ENCODE measurements at regions of chr16 and their contacts with region 1.

Region 1: DNA sequence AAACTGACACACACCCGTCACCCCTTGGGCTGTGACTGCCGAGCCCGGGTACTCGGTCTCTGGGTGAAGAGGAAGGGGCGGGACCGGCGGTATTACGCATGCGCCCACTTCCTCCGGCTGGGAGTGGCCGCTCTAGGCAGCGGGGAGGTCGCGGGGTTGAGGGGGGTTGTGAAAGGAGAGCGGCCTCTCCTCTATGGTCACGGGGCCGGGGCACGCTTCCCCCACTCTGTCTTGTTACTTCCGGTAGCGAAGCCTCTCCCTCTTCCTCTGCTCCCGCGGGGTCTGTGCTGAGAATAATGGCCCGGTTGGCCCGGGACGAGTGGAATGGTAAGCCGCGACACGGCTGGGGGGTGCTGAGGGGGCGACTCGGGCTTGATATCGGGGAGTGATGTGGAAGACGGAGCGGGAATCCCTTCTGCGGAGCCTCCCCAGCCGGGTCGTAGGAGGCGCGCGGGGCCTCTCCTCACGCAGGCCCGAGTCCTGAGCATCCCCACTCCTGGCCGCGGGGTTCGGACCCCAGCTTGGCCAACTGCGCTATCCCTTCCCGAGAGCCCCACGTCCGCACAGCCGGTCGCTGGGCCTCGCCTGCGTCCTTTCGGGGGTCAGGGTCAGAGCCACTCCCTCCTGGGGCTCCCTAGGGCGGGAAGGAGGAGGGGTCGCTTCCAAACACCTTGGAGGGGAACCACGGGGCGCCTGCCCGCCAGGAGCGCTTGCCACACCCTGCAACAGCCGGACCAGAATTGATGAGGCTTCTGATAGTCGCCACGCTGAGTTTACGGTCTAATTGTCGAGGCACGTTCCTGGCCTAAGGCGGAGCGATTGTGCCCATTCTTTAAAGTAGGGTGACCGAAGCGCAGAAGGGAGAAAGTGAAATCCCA is at the start of gene BFAR:
- DNase-seq: peak; percentile 99
- H3K4me3 Mint-ChIP-seq: peak within 1 kb of the TSS; percentile 100
- H3K27ac Mint-ChIP-seq: peak within 1 kb of the TSS; percentile 96
- H3K4me1 Mint-ChIP-seq: peaks cover 57% of the 10 kb centered on the region
- H3K27me3 Mint-ChIP-seq: no peaks in the 10 kb centered on the region
- total RNA-seq, gene BFAR: 46.5 to 51.4 TPM

Region 2: DNA sequence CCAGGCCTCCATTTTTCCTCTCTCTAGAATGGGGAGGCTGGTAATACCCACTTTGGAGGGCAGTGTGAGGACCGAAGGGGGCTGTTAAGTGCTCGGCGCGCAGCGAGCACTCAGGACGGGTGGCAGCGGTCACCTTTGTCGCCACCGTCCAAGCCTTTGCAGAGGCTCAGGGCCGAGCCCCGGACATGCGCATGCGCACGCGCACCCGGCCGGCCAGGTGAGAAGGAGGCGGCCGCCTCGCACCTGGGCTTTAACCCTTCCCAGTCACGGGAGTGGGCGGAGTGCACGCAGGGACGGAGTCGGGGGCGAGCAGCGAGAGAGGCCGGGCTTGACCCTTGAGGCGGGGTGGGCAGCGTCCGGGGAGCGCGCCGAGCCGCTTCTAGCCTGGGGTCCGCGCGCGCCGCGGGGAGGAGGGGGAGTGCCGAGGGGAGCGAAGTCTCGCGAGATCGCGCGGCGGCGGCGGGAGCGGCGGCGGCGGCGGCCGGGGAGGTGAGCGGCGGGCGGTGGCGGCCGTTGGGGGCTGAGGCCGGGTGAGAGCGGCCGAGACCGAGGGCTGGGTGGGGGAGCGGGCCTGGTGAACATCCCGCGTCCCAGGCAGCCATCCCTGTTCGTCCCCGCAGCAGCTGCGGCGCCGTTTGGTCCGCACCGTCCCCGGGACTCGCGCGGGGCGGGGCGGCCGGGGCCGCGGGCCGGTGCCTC is 561.9 kb before region 1 on chr16 and contains the start of gene MRTFB:
- CTCF ChIA-PET with region 1: no interaction called
- POLR2A ChIA-PET with region 1: no interaction called
- intact Hi-C with region 1: loop called (anchors 2 kb)
- DNase-seq: peak; percentile 82
- H3K4me3 Mint-ChIP-seq: peak within 1 kb of the TSS; percentile 83
- H3K27ac Mint-ChIP-seq: peak within 1 kb of the TSS; percentile 33
- H3K4me1 Mint-ChIP-seq: peaks cover 12% of the 10 kb centered on the region
- H3K27me3 Mint-ChIP-seq: no peaks in the 10 kb centered on the region
- total RNA-seq, gene MRTFB: 8.8 to 9.7 TPM

Region 3: GRCh38 chr16:14285513-14286385 is 347.2 kb before region 1 on chr16:
- CTCF ChIA-PET with region 1: interaction called, 3 read pairs
- POLR2A ChIA-PET with region 1: no interaction called
- intact Hi-C with region 1: loop called (anchors 5 kb)
- DNase-seq: peak; percentile 96
- H3K4me3 Mint-ChIP-seq: peak overlapping the region; percentile 85
- H3K27ac Mint-ChIP-seq: peak overlapping the region; percentile 77
- H3K4me1 Mint-ChIP-seq: peaks cover 13% of the 10 kb centered on the region
- H3K27me3 Mint-ChIP-seq: no peaks in the 10 kb centered on the region

Region 4: GRCh38 chr16:14300705-14301168 is 332.2 kb before region 1 on chr16:
- CTCF ChIA-PET with region 1: no interaction called
- POLR2A ChIA-PET with region 1: no interaction called
- intact Hi-C with region 1: loop called (anchors 2 kb)
- DNase-seq: peak; percentile 59
- H3K4me3 Mint-ChIP-seq: peak overlapping the region; percentile 55
- H3K27ac Mint-ChIP-seq: no peak overlapping the region
- H3K4me1 Mint-ChIP-seq: peaks cover 8% of the 10 kb centered on the region
- H3K27me3 Mint-ChIP-seq: peaks cover 10% of the 10 kb centered on the region